CD14-positive monocyte (primary cell): ENCODE measurements at regions of chr7 and their contacts with region 1.

Region 1: DNA sequence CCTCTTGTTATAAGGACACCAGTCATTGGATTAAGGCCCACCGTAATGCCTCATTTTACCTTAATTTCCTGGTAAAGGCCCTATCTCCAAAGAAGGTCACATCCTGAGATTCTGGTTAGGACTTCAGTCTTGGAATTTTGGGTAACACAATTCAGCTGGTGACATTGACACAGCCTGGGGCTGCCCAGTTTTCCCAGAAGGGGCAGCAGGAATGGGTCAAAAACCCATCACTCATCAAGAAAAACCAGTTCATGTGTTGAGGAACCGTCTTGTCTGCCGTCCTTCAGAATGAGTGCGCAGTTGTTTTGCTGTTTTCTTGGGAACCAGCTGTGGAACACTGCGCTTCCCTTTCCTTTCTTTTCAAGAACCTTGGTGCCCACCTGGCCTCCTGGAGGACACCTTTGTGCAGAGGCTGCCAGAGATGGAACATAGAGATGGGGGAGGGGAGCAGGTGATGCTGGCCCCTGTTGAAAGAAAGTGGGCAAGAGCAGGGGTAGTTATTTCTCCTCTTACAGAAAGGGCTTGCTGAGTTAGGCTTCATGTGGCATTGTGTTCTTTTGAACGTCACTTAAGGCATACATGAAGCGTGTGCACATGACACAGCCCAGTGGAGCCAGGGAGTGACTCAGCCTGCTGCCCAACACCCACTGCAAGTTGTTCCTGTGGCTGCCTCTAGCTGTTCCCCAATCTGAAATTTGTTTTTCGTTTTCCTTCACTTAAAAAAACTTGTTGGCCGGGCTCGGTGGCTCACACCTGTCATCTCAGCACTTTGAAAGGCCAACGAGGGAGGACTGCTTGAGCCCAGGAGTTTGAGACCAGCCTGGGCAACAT is 87.4 kb upstream of the TNS3 start:
- DNase-seq: peak; percentile 92 to 98 (median 95)
- H3K4me3 ChIP-seq: peak overlapping the region; percentile 11 to 58 (median 13)
- H3K4me3 Mint-ChIP-seq: peak overlapping the region; percentile 64 to 83
- H3K27ac ChIP-seq: peak overlapping the region; percentile 95 to 99
- H3K27ac Mint-ChIP-seq: peak overlapping the region; percentile 96 to 100 (median 98)
- H3K4me1 ChIP-seq: peaks cover 28 to 30% of the 10 kb centered on the region in 2 donors
- H3K4me1 Mint-ChIP-seq: peaks cover 32% of the 10 kb centered on the region
- H3K27me3 ChIP-seq: no peaks in the 10 kb centered on the region
- H3K27me3 Mint-ChIP-seq: peaks cover 0 to 1% (median 0%) of the 10 kb centered on the region in 3 donors
- CTCF ChIP-seq: no peak

Region 2: GRCh38 chr7:47474937-47475878 is 194.1 kb before region 1 on chr7:
- intact Hi-C with region 1: loop called (anchors 10 kb)
- DNase-seq: peak; percentile 94 to 96 (median 96)
- H3K4me3 ChIP-seq: peak overlapping the region in 1 of 3 experiments; percentile 36
- H3K4me3 Mint-ChIP-seq: no peak overlapping the region
- H3K27ac ChIP-seq: peak overlapping the region; percentile 84 to 86
- H3K27ac Mint-ChIP-seq: peak overlapping the region in 2 of 7 donors; percentile 80 to 88
- H3K4me1 ChIP-seq: peaks cover 40% of the 10 kb centered on the region in 2 donors
- H3K4me1 Mint-ChIP-seq: peaks cover 30% of the 10 kb centered on the region
- H3K27me3 ChIP-seq: no peaks in the 10 kb centered on the region
- H3K27me3 Mint-ChIP-seq: peaks cover 0 to 3% (median 0%) of the 10 kb centered on the region in 3 donors
- CTCF ChIP-seq: peak; percentile 43

Region 3: DNA sequence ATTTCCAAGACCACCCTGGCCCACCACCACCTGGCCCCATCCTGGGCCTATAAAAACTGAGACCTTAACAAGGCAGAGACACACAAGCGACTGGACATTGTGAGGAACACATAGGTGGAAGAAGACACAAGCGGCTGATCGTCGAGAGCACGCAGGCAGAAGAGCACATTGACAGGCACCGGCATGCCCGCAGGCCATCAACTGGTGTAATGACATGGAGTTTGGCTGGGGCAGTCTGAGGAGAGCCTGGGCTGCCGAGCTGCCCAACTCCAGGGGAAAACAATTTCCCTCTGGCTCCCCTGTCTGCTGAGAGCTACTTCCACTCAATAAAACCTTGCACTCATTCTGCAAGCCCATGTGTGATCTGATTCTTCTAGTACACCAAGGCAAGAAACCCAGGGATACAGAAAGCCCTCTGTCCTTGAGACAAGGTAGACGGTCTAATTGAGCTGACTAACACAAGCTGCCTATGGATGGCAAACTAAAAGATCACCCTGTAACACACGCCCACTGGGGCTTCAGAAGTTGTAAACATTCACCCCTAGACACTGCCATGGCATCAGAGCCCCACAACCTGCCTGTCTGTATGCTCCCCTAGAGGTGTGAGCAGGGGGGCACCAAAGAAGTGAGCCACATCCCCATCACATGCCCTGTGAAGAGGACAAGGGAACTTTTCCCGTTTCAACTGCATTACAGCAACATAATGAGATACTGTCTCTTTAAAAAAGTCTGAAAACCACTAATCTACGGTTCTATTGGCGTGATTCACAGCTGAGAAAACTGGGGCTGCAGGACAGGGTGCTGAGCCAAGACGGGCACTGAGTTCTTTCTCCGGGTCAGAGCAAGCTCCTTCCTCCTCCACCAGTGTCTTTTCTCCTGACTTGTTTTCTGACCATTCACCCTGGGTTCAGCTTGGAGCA is 68.8 kb before region 1 on chr7:
- intact Hi-C with region 1: loop called in 1 of 2 experiments (anchors 5 kb)
- DNase-seq: peak; percentile 43 to 63 (median 50)
- H3K4me3 ChIP-seq: peak overlapping the region in 1 of 3 experiments; percentile 8
- H3K4me3 Mint-ChIP-seq: peak overlapping the region; percentile 4 to 77
- H3K27ac ChIP-seq: peak overlapping the region; percentile 11 to 64
- H3K27ac Mint-ChIP-seq: peak overlapping the region; percentile 68 to 93 (median 81)
- H3K4me1 ChIP-seq: peaks cover 29 to 31% of the 10 kb centered on the region in 2 donors
- H3K4me1 Mint-ChIP-seq: peaks cover 42% of the 10 kb centered on the region
- H3K27me3 ChIP-seq: no peaks in the 10 kb centered on the region
- H3K27me3 Mint-ChIP-seq: peaks cover 0 to 9% (median 2%) of the 10 kb centered on the region in 3 donors
- CTCF ChIP-seq: no peak